ENCODE measurements at regions of chr2 and their contacts with region 1.

Region 1: GRCh38 chr2:191677646-191678436 is at the start of gene NABP1:
- DNase-seq: peak; percentile 98 to 100 (median 99)
- ATAC-seq: peak; percentile 86
- H3K4me3 ChIP-seq: peak within 1 kb of the TSS; percentile 78
- H3K4me3 Mint-ChIP-seq: peak within 1 kb of the TSS; percentile 97
- H3K27ac ChIP-seq: peak within 1 kb of the TSS; percentile 90 to 94
- H3K27ac Mint-ChIP-seq: peak within 1 kb of the TSS; percentile 100
- H3K4me1 ChIP-seq: peaks cover 44% of the 10 kb centered on the region
- H3K4me1 Mint-ChIP-seq: peaks cover 75% of the 10 kb centered on the region
- H3K27me3 ChIP-seq: no peaks in the 10 kb centered on the region
- H3K27me3 Mint-ChIP-seq: no peaks in the 10 kb centered on the region
- CTCF ChIP-seq: no peak
- total RNA-seq, gene NABP1: 32.0 to 32.9 TPM

Region 2: GRCh38 chr2:190648289-190649034 is 1029.4 kb before region 1 on chr2:
- CTCF ChIA-PET with region 1: no interaction called
- POLR2A ChIA-PET with region 1: no interaction called
- intact Hi-C with region 1: loop called in 1 of 2 experiments (anchors 5 kb)
- DNase-seq: peak; percentile 82 to 98 (median 89)
- ATAC-seq: peak; percentile 77
- H3K4me3 ChIP-seq: peak overlapping the region; percentile 71
- H3K4me3 Mint-ChIP-seq: peak overlapping the region; percentile 92
- H3K27ac ChIP-seq: peak overlapping the region; percentile 83
- H3K27ac Mint-ChIP-seq: peak overlapping the region; percentile 93
- H3K4me1 ChIP-seq: peaks cover 20% of the 10 kb centered on the region
- H3K4me1 Mint-ChIP-seq: peaks cover 57% of the 10 kb centered on the region
- H3K27me3 ChIP-seq: no peaks in the 10 kb centered on the region
- H3K27me3 Mint-ChIP-seq: no peaks in the 10 kb centered on the region
- CTCF ChIP-seq: no peak

Region 3: DNA sequence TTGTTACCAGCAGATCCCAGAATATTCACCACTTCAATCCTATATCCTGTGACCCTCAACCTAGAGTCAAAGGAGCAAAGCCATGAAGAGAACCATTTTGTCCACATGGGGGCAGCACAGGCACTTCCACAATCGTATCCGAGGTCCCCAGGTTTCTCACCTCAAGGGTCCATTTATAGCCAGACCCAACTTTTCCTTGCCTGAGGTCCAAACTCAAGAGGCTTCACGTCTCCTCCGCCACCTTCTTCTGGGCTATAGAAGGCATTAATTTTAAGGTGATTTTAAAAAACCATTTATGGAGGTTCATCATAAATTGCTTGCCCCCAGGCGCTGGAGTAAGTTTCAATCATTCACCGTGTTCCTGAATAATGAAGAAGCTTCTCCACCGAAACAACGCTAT is 111.5 kb before region 1 on chr2:
- CTCF ChIA-PET with region 1: interaction called, 3 read pairs
- POLR2A ChIA-PET with region 1: interaction called, 15 read pairs
- intact Hi-C with region 1: loop called in 1 of 2 experiments (anchors 5 kb)
- DNase-seq: peak; percentile 49 to 83 (median 60)
- ATAC-seq: peak; percentile 54
- H3K4me3 ChIP-seq: no peak overlapping the region
- H3K4me3 Mint-ChIP-seq: no peak overlapping the region
- H3K27ac ChIP-seq: no peak overlapping the region
- H3K27ac Mint-ChIP-seq: no peak overlapping the region
- H3K4me1 ChIP-seq: peaks cover 8% of the 10 kb centered on the region
- H3K4me1 Mint-ChIP-seq: peaks cover 18% of the 10 kb centered on the region
- H3K27me3 ChIP-seq: no peaks in the 10 kb centered on the region
- H3K27me3 Mint-ChIP-seq: peaks cover 12% of the 10 kb centered on the region
- CTCF ChIP-seq: peak; percentile 84

Region 4: DNA sequence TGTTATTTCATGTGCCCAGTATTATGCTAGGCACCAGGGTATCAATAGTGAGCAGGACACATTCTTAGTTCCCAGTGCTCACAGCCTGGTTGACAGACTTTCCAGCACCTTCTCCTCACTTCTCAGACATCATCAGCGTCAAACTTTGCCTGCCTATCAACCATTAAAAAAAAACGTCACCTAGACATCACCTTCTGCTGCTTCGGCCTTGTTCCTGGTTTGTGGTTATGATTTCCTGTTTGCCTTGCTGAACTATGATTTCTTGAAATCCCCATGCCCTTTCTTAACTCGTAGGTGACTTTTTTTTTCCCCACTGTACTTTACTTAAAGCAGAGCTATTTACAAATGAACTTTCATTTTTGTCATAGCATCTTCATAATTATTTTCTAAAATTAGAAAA is 60.3 kb before region 1 on chr2:
- CTCF ChIA-PET with region 1: interaction called, 3 read pairs
- POLR2A ChIA-PET with region 1: interaction called, 220 read pairs
- intact Hi-C with region 1: loop called (anchors 1 to 2 kb)
- DNase-seq: peak in 13 of 14 experiments; percentile 10 to 93 (median 38)
- ATAC-seq: peak; percentile 94
- H3K4me3 ChIP-seq: no peak overlapping the region
- H3K4me3 Mint-ChIP-seq: peak overlapping the region; percentile 3
- H3K27ac ChIP-seq: peak overlapping the region; percentile 85 to 90
- H3K27ac Mint-ChIP-seq: peak overlapping the region; percentile 73
- H3K4me1 ChIP-seq: peaks cover 31% of the 10 kb centered on the region
- H3K4me1 Mint-ChIP-seq: peaks cover 50% of the 10 kb centered on the region
- H3K27me3 ChIP-seq: no peaks in the 10 kb centered on the region
- H3K27me3 Mint-ChIP-seq: no peaks in the 10 kb centered on the region
- CTCF ChIP-seq: no peak

Region 5: DNA sequence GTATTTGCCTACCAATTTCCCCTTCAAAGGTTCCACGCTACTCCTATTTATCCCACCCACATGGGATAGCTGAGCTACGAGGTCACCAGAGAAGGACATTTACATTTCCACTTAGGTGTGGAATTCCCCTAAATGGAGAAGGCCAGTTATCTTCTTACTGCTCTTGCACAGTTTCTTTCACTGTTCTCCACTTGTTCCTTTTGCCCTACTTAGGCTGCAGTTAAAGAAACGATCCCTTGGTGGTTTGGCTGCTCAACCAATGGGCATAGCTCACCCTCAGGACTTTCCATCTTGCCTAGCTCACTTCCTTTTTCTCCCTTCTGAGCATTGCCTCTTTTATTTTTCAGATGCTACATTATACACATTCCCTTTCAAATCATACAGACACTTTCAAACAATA is 11.1 kb before region 1 on chr2:
- CTCF ChIA-PET with region 1: no interaction called
- POLR2A ChIA-PET with region 1: interaction called, 28 read pairs
- intact Hi-C with region 1: no loop called
- DNase-seq: peak in 3 of 14 experiments; percentile 34 to 59 (median 53)
- ATAC-seq: no peak
- H3K4me3 ChIP-seq: no peak overlapping the region
- H3K4me3 Mint-ChIP-seq: no peak overlapping the region
- H3K27ac ChIP-seq: no peak overlapping the region
- H3K27ac Mint-ChIP-seq: no peak overlapping the region
- H3K4me1 ChIP-seq: peaks cover 4% of the 10 kb centered on the region
- H3K4me1 Mint-ChIP-seq: peaks cover 6% of the 10 kb centered on the region
- H3K27me3 ChIP-seq: no peaks in the 10 kb centered on the region
- H3K27me3 Mint-ChIP-seq: no peaks in the 10 kb centered on the region
- CTCF ChIP-seq: no peak